Calu3 (cell line): ENCODE measurements at regions of chr11 and their contacts with region 1.

Region 1: GRCh38 chr11:62560566-62561103 is 13.1 kb downstream of the EEF1G start:
- DNase-seq: peak; percentile 97
- H3K4me3 Mint-ChIP-seq: peak overlapping the region; percentile 16
- H3K27ac Mint-ChIP-seq: peak overlapping the region; percentile 76
- H3K4me1 Mint-ChIP-seq: peaks cover 61% of the 10 kb centered on the region
- H3K27me3 Mint-ChIP-seq: no peaks in the 10 kb centered on the region
- CTCF ChIP-seq: peak; percentile 89

Region 2: GRCh38 chr11:62402226-62402959 is 158.2 kb before region 1 on chr11:
- CTCF ChIA-PET with region 1: no interaction called
- intact Hi-C with region 1: no loop called
- DNase-seq: no peak
- H3K4me3 Mint-ChIP-seq: no peak overlapping the region
- H3K27ac Mint-ChIP-seq: no peak overlapping the region
- H3K4me1 Mint-ChIP-seq: peaks cover 9% of the 10 kb centered on the region
- H3K27me3 Mint-ChIP-seq: peaks cover 37% of the 10 kb centered on the region
- CTCF ChIP-seq: no peak

Region 3: GRCh38 chr11:62421996-62422395 is 138.6 kb before region 1 on chr11:
- CTCF ChIA-PET with region 1: interaction called, 43 read pairs
- intact Hi-C with region 1: loop called (anchors 5 kb)
- DNase-seq: no peak
- H3K4me3 Mint-ChIP-seq: no peak overlapping the region
- H3K27ac Mint-ChIP-seq: no peak overlapping the region
- H3K4me1 Mint-ChIP-seq: peaks cover 12% of the 10 kb centered on the region
- H3K27me3 Mint-ChIP-seq: peaks cover 30% of the 10 kb centered on the region
- CTCF ChIP-seq: no peak

Region 4: GRCh38 chr11:62497132-62497915 is 63.3 kb before region 1 on chr11:
- CTCF ChIA-PET with region 1: interaction called, 17 read pairs
- intact Hi-C with region 1: loop called (anchors 1 kb)
- DNase-seq: peak; percentile 62
- H3K4me3 Mint-ChIP-seq: no peak overlapping the region
- H3K27ac Mint-ChIP-seq: peak overlapping the region; percentile 35
- H3K4me1 Mint-ChIP-seq: peaks cover 32% of the 10 kb centered on the region
- H3K27me3 Mint-ChIP-seq: no peaks in the 10 kb centered on the region
- CTCF ChIP-seq: peak; percentile 69

Region 5: GRCh38 chr11:62573592-62574362 is 13.1 kb after region 1 on chr11 and contains the start of gene EEF1G:
- CTCF ChIA-PET with region 1: interaction called, 14 read pairs
- intact Hi-C with region 1: no loop called
- DNase-seq: peak; percentile 98
- H3K4me3 Mint-ChIP-seq: peak within 1 kb of the TSS; percentile 96
- H3K27ac Mint-ChIP-seq: peak within 1 kb of the TSS; percentile 99
- H3K4me1 Mint-ChIP-seq: peaks cover 51% of the 10 kb centered on the region
- H3K27me3 Mint-ChIP-seq: no peaks in the 10 kb centered on the region
- CTCF ChIP-seq: no peak
- total RNA-seq, gene EEF1G: 970 and 1,189 TPM in 2 replicates

Region 6: GRCh38 chr11:62791501-62792201 is 231.0 kb after region 1 on chr11 and contains the start of gene TMEM223:
- CTCF ChIA-PET with region 1: no interaction called
- intact Hi-C with region 1: no loop called
- DNase-seq: peak; percentile 93
- H3K4me3 Mint-ChIP-seq: peak within 1 kb of the TSS; percentile 96
- H3K27ac Mint-ChIP-seq: peak within 1 kb of the TSS; percentile 68
- H3K4me1 Mint-ChIP-seq: peaks cover 24% of the 10 kb centered on the region
- H3K27me3 Mint-ChIP-seq: no peaks in the 10 kb centered on the region
- CTCF ChIP-seq: peak; percentile 20
- total RNA-seq, gene TMEM223: 19.4 and 20.5 TPM in 2 replicates